Activated CD8-positive, alpha-beta T cell treated with anti-CD3 and anti-CD28 coated beads, Interleukin-2, amount 10 ng/mL, durations not matched to agents 7 days and 5 days (primary cell): ENCODE measurements at regions of chr15 and their contacts with region 1.

Region 1: GRCh38 chr15:74799856-74800547 is 12.6 kb upstream of the LMAN1L start:
- DNase-seq: peak; percentile 90
- ATAC-seq: peak; percentile 91
- H3K4me3 Mint-ChIP-seq: no peak overlapping the region
- H3K27ac Mint-ChIP-seq: peak overlapping the region; percentile 81
- H3K4me1 Mint-ChIP-seq: peaks cover 58% of the 10 kb centered on the region
- H3K27me3 Mint-ChIP-seq: no peaks in the 10 kb centered on the region

Region 2: GRCh38 chr15:74787251-74788041 is 12.6 kb before region 1 on chr15:
- CTCF ChIA-PET with region 1: interaction called, 1,683 read pairs
- POLR2A ChIA-PET with region 1: interaction called, 670 read pairs
- DNase-seq: peak; percentile 97
- ATAC-seq: peak; percentile 72
- H3K4me3 Mint-ChIP-seq: peak overlapping the region; percentile 90
- H3K27ac Mint-ChIP-seq: peak overlapping the region; percentile 99
- H3K4me1 Mint-ChIP-seq: peaks cover 66% of the 10 kb centered on the region
- H3K27me3 Mint-ChIP-seq: no peaks in the 10 kb centered on the region

Region 3: GRCh38 chr15:74937596-74938296 is 137.7 kb after region 1 on chr15 and contains the start of gene COX5A:
- CTCF ChIA-PET with region 1: no interaction called
- POLR2A ChIA-PET with region 1: no interaction called
- DNase-seq: peak; percentile 95
- ATAC-seq: peak; percentile 97
- H3K4me3 Mint-ChIP-seq: peak within 1 kb of the TSS; percentile 91
- H3K27ac Mint-ChIP-seq: peak within 1 kb of the TSS; percentile 92
- H3K4me1 Mint-ChIP-seq: peaks cover 41% of the 10 kb centered on the region
- H3K27me3 Mint-ChIP-seq: peaks cover 2% of the 10 kb centered on the region
- total RNA-seq, gene COX5A: 305 to 313 TPM

Region 4: DNA sequence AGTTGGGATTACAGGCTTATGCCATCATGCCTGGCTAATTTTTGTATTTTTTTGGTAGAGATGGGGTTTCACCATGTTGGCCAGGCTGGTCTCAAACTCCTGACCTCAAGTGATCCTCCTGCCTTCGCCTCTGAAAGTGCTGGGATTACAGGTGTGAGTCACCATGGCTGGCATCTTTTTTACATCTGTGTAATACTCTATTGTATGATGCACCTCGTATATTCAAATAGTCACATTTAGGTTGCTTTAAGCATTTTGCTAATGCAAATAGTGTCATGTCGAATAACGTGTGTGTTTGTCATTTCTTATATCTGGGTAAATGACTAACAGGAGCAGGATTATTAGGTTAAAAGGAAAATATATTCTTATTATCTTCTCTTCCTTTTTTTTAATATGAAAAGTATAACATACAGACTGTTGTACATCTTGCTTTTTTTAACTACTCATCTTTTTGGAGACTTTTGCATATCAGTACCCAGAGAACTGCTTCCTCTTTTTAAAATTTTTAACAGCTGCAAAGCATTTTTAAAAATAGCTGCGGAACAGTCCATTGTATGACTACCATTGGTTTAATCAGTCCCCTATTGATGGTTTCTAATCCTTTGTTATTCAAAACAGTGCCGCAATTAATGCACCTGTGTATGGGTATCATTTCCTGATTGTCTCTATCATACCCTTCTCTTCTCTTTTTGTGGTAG is 208.8 kb after region 1 on chr15:
- CTCF ChIA-PET with region 1: no interaction called
- POLR2A ChIA-PET with region 1: no interaction called
- DNase-seq: no peak
- ATAC-seq: no peak
- H3K4me3 Mint-ChIP-seq: no peak overlapping the region
- H3K27ac Mint-ChIP-seq: no peak overlapping the region
- H3K4me1 Mint-ChIP-seq: peaks cover 7% of the 10 kb centered on the region
- H3K27me3 Mint-ChIP-seq: peaks cover 17% of the 10 kb centered on the region